Activated B cell treated with CpG ODN at 0.5 μM for 24 hours (primary cell): ENCODE measurements at regions of chr10 and their contacts with region 1.

Region 1: DNA sequence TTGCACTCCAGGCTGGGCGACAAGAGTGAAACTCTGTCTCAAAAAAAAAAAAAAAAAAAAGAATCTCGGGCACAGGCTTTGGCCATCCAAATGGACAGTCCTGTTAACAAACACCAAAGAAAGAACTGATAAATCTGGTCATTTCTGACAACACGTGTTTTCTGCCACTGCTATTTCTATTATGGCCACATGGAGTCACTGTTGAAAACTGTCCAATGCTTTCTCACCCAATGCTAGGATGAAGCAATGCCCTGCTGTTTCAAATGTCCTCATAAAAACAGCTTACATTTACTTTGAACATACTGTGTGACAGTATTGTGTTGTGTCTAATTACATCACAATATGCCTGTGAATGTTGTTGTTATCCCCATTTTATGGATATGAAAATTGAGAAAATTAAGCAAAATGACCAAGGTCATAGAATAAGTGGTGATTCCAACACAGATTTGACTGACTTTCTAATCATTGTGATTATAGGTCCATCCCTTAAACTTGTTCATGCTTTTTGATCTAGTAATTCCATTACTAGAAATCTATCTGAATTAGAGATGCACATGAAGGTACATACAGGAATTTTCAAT is 19.9 kb upstream of the MAP3K8 start:
- DNase-seq: no peak
- ATAC-seq: peak; percentile 67
- H3K4me3 Mint-ChIP-seq: no peak overlapping the region
- H3K27ac Mint-ChIP-seq: peak overlapping the region; percentile 73
- H3K4me1 Mint-ChIP-seq: peaks cover 45% of the 10 kb centered on the region
- H3K27me3 Mint-ChIP-seq: no peaks in the 10 kb centered on the region
- CTCF ChIP-seq: peak; percentile 70

Region 2: GRCh38 chr10:30324448-30325110 is 89.5 kb before region 1 on chr10:
- CTCF ChIA-PET with region 1: no interaction called
- POLR2A ChIA-PET with region 1: no interaction called
- intact Hi-C with region 1: no loop called
- DNase-seq: no peak
- ATAC-seq: no peak
- H3K4me3 Mint-ChIP-seq: no peak overlapping the region
- H3K27ac Mint-ChIP-seq: no peak overlapping the region
- H3K4me1 Mint-ChIP-seq: no peaks in the 10 kb centered on the region
- H3K27me3 Mint-ChIP-seq: no peaks in the 10 kb centered on the region
- CTCF ChIP-seq: no peak

Region 3: GRCh38 chr10:30447125-30447799 is 33.2 kb after region 1 on chr10:
- CTCF ChIA-PET with region 1: interaction called, 13 read pairs
- POLR2A ChIA-PET with region 1: interaction called, 11 read pairs
- intact Hi-C with region 1: no loop called
- DNase-seq: no peak
- ATAC-seq: peak; percentile 34
- H3K4me3 Mint-ChIP-seq: peak overlapping the region; percentile 24
- H3K27ac Mint-ChIP-seq: peak overlapping the region; percentile 59
- H3K4me1 Mint-ChIP-seq: peaks cover 59% of the 10 kb centered on the region
- H3K27me3 Mint-ChIP-seq: no peaks in the 10 kb centered on the region
- CTCF ChIP-seq: no peak

Region 4: DNA sequence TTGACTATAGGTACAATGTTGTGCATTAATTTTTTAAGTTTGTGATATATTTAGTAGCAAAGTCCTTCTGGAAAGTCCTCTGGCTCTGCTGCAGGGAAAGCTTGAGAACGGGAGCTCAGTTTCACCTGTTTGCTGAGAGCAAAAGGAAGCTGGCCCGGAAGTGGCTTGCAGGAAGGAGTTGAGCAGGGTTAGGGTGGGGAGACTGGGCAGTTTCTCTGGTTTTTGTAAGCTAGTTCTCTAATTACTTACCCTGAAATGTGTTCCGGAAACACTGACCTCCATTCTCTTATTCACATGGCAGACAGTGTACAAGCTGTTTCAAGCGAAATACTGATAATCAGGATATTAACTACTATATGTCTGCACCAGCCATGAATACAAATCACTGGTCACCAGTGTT is 42.2 kb after region 1 on chr10:
- CTCF ChIA-PET with region 1: interaction called, 4 read pairs
- POLR2A ChIA-PET with region 1: interaction called, 4 read pairs
- intact Hi-C with region 1: loop called (anchors 2 kb)
- DNase-seq: no peak
- ATAC-seq: peak; percentile 63
- H3K4me3 Mint-ChIP-seq: peak overlapping the region; percentile 53
- H3K27ac Mint-ChIP-seq: peak overlapping the region; percentile 81
- H3K4me1 Mint-ChIP-seq: peaks cover 46% of the 10 kb centered on the region
- H3K27me3 Mint-ChIP-seq: no peaks in the 10 kb centered on the region
- CTCF ChIP-seq: no peak

Region 5: DNA sequence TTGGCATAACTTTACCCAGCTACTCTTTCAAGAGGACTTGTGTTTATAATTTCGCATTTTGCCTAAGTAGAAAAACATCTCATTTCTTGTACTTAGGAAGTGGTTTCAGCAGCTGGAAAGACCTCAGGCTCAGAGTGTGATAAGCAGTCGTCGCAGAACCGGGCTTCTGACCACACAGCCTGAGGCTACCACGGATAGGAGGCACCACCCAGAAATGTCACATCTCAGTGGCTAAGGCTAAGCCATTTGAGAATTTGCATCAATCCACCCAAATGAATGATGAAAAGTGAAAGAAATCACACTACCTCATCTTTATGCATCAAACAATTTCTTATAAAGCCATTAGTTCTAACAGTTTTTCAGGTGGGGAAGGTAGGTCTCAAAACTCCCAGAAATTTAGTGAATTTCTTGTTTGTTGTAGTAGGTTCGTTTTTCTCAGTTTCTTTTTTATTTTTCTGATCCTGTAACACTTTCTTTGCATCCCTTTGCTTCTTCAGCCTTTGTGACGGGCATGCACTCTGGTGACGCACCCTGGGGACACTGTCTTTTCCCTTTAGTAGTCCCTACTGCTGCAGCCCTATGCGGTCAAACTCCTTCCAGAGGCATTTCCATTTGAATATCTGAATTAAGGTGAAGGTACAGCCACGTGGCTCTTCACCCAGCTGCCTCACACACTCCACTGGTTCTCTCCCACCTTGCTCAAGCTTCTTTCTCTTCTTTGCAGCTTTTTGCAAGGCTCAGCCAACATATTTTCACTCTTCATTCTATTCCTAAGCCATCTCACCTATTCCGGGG is 88.4 kb after region 1 on chr10:
- CTCF ChIA-PET with region 1: no interaction called
- POLR2A ChIA-PET with region 1: interaction called, 7 read pairs
- intact Hi-C with region 1: loop called (anchors 1 kb)
- DNase-seq: no peak
- ATAC-seq: peak; percentile 85
- H3K4me3 Mint-ChIP-seq: peak overlapping the region; percentile 79
- H3K27ac Mint-ChIP-seq: peak overlapping the region; percentile 83
- H3K4me1 Mint-ChIP-seq: peaks cover 89% of the 10 kb centered on the region
- H3K27me3 Mint-ChIP-seq: no peaks in the 10 kb centered on the region
- CTCF ChIP-seq: no peak

Region 6: DNA sequence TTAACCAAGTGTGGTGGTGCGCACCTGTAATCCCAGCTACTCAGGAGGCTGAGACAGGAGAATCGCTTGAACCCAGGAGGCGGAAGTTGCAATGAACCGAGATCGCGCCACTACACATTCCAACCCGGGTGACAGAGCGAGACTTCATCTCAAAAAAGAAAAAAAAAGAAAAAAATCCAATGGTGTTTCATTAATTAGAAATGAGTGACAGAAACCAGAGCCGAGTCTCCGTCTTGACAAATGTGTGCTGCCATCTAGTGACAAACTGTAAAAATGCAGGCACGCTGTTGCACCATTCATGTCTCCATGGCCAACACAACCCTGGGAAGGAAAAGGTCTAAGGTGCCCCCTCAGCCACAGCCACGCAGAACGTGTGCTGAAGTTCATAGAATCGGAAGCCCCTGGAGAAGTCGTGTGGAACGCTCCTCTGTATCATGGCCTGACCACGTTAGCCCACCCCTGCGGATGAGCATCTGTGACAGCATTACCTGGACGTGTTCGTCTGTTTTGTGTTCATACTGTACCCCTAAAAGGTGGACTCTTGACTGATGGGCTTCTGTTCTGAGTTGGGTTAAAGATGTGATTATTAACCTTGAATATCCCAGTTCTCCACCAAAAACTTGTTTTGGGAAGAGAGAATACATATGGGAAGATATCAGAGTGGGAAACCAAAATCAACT is 120.5 kb after region 1 on chr10:
- CTCF ChIA-PET with region 1: interaction called, 42 read pairs
- POLR2A ChIA-PET with region 1: interaction called, 24 read pairs
- intact Hi-C with region 1: loop called (anchors 1 kb)
- DNase-seq: peak; percentile 40
- ATAC-seq: peak; percentile 45
- H3K4me3 Mint-ChIP-seq: no peak overlapping the region
- H3K27ac Mint-ChIP-seq: peak overlapping the region; percentile 69
- H3K4me1 Mint-ChIP-seq: peaks cover 42% of the 10 kb centered on the region
- H3K27me3 Mint-ChIP-seq: no peaks in the 10 kb centered on the region
- CTCF ChIP-seq: peak; percentile 57

Region 7: GRCh38 chr10:30583778-30584415 is 169.8 kb after region 1 on chr10:
- CTCF ChIA-PET with region 1: interaction called, 4 read pairs
- POLR2A ChIA-PET with region 1: interaction called, 10 read pairs
- intact Hi-C with region 1: loop called (anchors 1 kb)
- DNase-seq: no peak
- ATAC-seq: no peak
- H3K4me3 Mint-ChIP-seq: peak overlapping the region; percentile 67
- H3K27ac Mint-ChIP-seq: peak overlapping the region; percentile 31
- H3K4me1 Mint-ChIP-seq: peaks cover 49% of the 10 kb centered on the region
- H3K27me3 Mint-ChIP-seq: no peaks in the 10 kb centered on the region
- CTCF ChIP-seq: no peak